AG04449 (cell line): ENCODE measurements at regions of chr12 and their contacts with region 1.

Region 1: GRCh38 chr12:46382964-46383653 is 10.5 kb upstream of the SLC38A2 start:
- DNase-seq: no peak
- H3K4me3 ChIP-seq: peak overlapping the region; percentile 70
- CTCF ChIP-seq: no peak

Region 2: DNA sequence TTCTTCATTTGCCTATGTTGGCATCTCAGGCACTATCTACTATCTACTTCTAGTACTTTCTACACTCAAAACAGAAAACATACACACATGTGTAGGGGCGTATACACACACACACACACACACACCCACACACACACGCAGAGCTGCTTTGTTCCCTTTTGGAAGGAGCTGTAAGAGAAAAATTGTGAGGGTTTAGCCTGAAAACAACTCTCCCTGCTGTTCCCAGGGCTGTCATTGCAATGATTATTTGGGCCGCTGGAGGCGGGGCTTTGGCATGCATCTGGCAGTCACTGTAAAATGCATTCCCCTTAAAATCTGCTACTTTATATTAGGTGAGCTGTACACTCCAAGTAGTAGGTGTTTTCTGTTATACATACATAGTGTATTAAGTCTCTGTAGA is 18.6 kb after region 1 on chr12:
- CTCF ChIA-PET with region 1: interaction called, 7 read pairs
- POLR2A ChIA-PET with region 1: interaction called, 11 read pairs
- DNase-seq: no peak
- H3K4me3 ChIP-seq: no peak overlapping the region
- CTCF ChIP-seq: peak; percentile 37

Region 3: GRCh38 chr12:46430340-46430948 is 47.3 kb after region 1 on chr12:
- CTCF ChIA-PET with region 1: no interaction called
- POLR2A ChIA-PET with region 1: no interaction called
- DNase-seq: peak; percentile 55
- H3K4me3 ChIP-seq: no peak overlapping the region
- CTCF ChIP-seq: no peak